ENCODE measurements at regions of chr7 and their contacts with region 1.

Region 1: GRCh38 chr7:158295966-158296797 is 291.4 kb downstream of the PTPRN2 start:
- DNase-seq: no peak
- ATAC-seq: no peak
- H3K4me3 ChIP-seq: no peak overlapping the region
- H3K4me3 Mint-ChIP-seq: no peak overlapping the region
- H3K27ac ChIP-seq: no peak overlapping the region
- H3K27ac Mint-ChIP-seq: no peak overlapping the region
- H3K4me1 ChIP-seq: no peaks in the 10 kb centered on the region
- H3K4me1 Mint-ChIP-seq: no peaks in the 10 kb centered on the region
- H3K27me3 ChIP-seq: no peaks in the 10 kb centered on the region
- H3K27me3 Mint-ChIP-seq: peaks cover 0 to 21% (median 5%) of the 10 kb centered on the region in 5 donors

Region 2: GRCh38 chr7:158992759-158993158 is 696.6 kb after region 1 on chr7:
- CTCF ChIA-PET with region 1: interaction called, 12 read pairs
- POLR2A ChIA-PET with region 1: no interaction called
- intact Hi-C with region 1: no loop called
- DNase-seq: no peak
- ATAC-seq: no peak
- H3K4me3 ChIP-seq: no peak overlapping the region
- H3K4me3 Mint-ChIP-seq: peak overlapping the region in 9 of 10 donors; percentile 20 to 69 (median 65)
- H3K27ac ChIP-seq: no peak overlapping the region
- H3K27ac Mint-ChIP-seq: peak overlapping the region in 6 of 9 donors; percentile 7 to 78 (median 66)
- H3K4me1 ChIP-seq: no peaks in the 10 kb centered on the region
- H3K4me1 Mint-ChIP-seq: peaks cover 0 to 29% (median 19%) of the 10 kb centered on the region in 7 donors
- H3K27me3 ChIP-seq: no peaks in the 10 kb centered on the region
- H3K27me3 Mint-ChIP-seq: peaks cover 33 to 42% (median 40%) of the 10 kb centered on the region in 5 donors